ENCODE measurements at regions of chr1 and their contacts with region 1.

Region 1: GRCh38 chr1:20633190-20634064 is at the start of gene PINK1:
- DNase-seq: peak; percentile 81 to 95
- ATAC-seq: peak; percentile 90
- H3K4me3 ChIP-seq: peak within 1 kb of the TSS; percentile 54 to 98
- H3K27ac ChIP-seq: peak within 1 kb of the TSS in 1 of 2 donors; percentile 84
- H3K4me1 ChIP-seq: peaks cover 0 to 6% of the 10 kb centered on the region in 2 donors
- H3K27me3 ChIP-seq: no peaks in the 10 kb centered on the region
- total RNA-seq, gene PINK1: 72.0 to 90.2 TPM

Region 2: DNA sequence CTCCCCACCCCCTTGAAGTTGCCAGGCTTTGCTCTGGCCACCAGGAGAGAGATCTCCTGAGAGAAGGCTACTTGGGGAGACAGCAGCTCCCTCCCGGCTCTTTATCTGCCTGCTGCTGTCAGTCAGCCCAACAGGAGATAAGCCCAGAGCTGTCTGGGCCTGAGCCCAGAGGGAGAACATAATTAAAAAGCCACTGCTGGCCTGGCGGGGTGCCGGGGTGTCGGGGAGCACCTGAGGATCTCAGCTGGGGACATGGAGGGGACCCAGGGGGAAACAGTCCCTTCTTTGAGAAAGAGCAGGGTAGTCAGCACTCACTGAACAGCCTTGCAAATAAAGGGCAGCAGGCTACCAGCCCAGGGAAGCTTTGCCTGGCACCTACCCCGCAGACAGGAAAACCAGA is 324.9 kb before region 1 on chr1:
- intact Hi-C with region 1: no loop called
- DNase-seq: no peak
- ATAC-seq: no peak
- H3K4me3 ChIP-seq: no peak overlapping the region
- H3K27ac ChIP-seq: no peak overlapping the region
- H3K4me1 ChIP-seq: no peaks in the 10 kb centered on the region
- H3K27me3 ChIP-seq: no peaks in the 10 kb centered on the region

Region 3: GRCh38 chr1:20521960-20522861 is 111.2 kb before region 1 on chr1:
- intact Hi-C with region 1: loop called (anchors 1 to 5 kb)
- DNase-seq: peak; percentile 75 to 84
- ATAC-seq: peak; percentile 70
- H3K4me3 ChIP-seq: no peak overlapping the region
- H3K27ac ChIP-seq: no peak overlapping the region
- H3K4me1 ChIP-seq: no peaks in the 10 kb centered on the region
- H3K27me3 ChIP-seq: peaks cover 0 to 2% of the 10 kb centered on the region in 2 donors

Region 4: DNA sequence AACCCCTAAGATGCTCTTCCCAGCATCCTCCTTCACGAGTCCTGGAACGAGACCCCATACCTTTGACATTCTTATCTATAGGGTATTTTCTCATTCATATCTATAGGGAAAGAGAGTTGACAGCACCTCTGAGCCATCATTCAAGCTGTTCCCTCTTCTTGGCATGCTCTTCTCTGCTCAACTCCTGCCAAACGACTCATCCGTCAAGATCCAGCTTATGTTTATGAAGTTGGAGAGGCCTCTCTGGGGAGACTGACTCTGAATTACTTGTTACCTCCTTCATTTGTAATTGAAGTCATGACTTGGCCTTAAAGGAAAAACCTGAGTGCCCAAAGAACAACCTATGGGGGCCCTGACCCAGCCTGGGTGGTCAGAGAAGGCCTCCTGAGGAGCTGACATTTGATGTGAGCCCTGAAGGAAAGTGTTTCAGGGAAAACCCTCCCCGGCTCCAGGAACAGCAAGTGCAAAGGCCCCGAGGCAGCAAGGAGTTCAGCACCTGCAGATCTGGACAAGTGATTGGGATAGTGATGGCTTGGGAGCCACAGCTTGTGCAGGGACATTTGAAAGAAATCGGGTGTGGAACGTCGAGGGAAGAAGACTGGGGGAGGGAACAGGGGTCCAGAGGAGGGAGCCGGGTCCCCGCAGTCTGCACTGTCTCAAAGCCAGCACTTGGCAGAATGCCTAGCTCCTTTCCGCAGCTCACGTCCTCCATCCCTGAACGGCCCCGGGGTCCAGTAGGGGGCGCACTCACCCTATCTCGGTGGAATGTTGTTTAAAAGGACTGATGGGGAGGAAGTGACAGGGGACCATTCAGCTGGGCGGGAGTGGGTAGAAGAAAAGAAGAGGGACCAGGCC is 58.5 kb before region 1 on chr1:
- intact Hi-C with region 1: loop called in 1 of 2 experiments (anchors 5 kb)
- DNase-seq: peak; percentile 86 to 94
- ATAC-seq: peak; percentile 91
- H3K4me3 ChIP-seq: no peak overlapping the region
- H3K27ac ChIP-seq: no peak overlapping the region
- H3K4me1 ChIP-seq: no peaks in the 10 kb centered on the region
- H3K27me3 ChIP-seq: no peaks in the 10 kb centered on the region

Region 5: DNA sequence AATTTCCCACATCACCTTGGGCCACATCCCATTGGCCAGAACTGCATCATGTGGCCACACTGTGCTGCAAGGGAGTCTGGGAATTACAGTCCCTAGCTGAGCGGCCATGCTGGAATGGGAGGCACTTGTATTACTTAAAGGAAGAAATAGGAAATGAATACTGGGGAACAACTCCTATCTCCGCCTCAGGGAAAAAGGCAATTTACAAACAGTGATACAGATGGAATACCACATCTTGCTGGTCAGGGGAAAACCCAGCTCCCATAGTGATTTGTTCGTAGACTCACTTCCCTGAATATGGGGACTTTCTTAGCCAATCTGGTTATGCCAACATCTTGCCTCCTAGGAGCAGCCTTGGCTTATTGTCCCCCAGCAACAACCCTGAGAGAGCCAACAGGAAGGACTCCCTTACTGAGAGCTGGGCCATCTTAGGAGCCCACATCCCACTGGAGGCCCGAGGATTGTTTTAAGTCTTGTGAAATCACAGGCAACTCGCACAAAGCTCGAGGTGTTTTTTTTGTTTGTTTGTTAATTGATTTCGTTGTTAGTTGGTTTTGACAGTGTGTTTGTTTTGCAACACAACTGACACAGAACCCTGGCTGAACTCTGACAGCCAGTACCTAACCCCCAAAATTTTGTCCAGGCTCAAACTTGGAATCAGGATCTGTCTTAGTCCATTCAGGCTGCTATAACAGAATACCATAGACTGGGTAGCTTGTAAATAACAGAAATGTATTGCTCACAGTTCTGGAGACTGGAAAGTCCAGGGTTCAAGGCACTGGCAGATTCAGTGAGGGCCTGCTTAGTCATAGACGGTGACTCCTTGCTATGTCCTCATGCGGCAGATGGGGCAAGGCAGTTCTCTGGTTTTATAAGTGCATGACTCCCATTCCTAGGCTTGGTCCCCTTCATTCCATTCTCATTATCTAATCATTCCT is 29.6 kb before region 1 on chr1:
- intact Hi-C with region 1: no loop called
- DNase-seq: no peak
- ATAC-seq: no peak
- H3K4me3 ChIP-seq: no peak overlapping the region
- H3K27ac ChIP-seq: no peak overlapping the region
- H3K4me1 ChIP-seq: no peaks in the 10 kb centered on the region
- H3K27me3 ChIP-seq: no peaks in the 10 kb centered on the region

Region 6: DNA sequence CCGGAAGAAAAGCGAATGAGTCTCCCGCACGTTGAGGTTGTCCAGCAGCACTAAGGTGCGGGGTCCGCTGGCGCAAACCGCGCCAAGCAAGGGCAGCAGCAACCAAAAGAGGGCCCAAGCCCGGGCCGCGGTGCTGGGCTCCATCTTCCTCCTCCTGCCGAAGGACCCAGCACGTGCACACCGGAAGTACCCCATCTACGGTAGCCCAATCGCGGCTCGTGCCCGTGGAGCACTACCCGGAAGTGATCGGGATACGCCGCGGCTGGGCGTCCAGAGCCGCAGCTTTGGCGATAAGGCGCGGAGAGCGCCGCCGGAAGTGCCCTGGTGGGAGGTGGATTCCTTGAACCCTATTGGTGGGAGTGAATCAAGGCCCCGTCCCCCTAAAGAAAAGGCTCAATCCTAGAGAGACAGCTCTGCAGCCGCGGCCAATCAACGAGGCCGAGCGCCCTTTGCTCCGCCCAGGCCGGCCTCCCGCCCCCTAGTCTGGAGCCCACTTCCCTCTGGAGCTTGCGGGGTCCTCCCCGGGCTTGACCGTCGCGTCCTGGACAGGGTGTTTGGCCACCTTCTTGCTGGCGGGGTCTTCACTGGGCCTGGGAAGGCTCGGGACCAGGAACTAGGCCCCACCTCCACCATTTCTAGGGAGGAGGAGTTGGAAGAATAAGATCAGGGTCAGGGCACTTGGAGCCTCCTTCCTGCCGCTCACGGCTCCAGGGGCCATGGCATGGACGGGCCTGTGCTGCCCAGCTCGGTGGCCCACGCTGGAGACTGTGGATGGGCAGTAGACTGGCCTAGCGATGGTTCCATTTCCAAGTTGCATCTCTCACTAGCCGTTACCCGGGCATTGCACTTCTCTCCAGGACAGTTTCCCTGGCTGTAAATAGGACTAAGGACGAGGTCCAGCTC is 28.0 kb after region 1 on chr1 and contains the start of gene DDOST:
- intact Hi-C with region 1: loop called in 1 of 2 experiments (anchors 2 kb)
- DNase-seq: peak; percentile 97 to 98
- ATAC-seq: peak; percentile 97
- H3K4me3 ChIP-seq: peak within 1 kb of the TSS; percentile 66
- H3K27ac ChIP-seq: peak within 1 kb of the TSS in 1 of 2 donors; percentile 71
- H3K4me1 ChIP-seq: no peaks in the 10 kb centered on the region
- H3K27me3 ChIP-seq: no peaks in the 10 kb centered on the region
- total RNA-seq, gene DDOST: 123 to 135 TPM

Region 7: GRCh38 chr1:21034725-21035628 is 401.6 kb after region 1 on chr1:
- intact Hi-C with region 1: no loop called
- DNase-seq: no peak
- ATAC-seq: no peak
- H3K4me3 ChIP-seq: no peak overlapping the region
- H3K27ac ChIP-seq: no peak overlapping the region
- H3K4me1 ChIP-seq: no peaks in the 10 kb centered on the region
- H3K27me3 ChIP-seq: no peaks in the 10 kb centered on the region